Naive thymus-derived CD4-positive, alpha-beta T cell (primary cell): ENCODE measurements at regions of chrX and their contacts with region 1.

Region 1: GRCh38 chrX:100768679-100769338 is 36.9 kb upstream of the SYTL4 start:
- DNase-seq: peak; percentile 50 to 87 (median 77)
- ATAC-seq: peak; percentile 100
- H3K4me3 ChIP-seq: no peak overlapping the region
- H3K4me3 Mint-ChIP-seq: no peak overlapping the region
- H3K27ac ChIP-seq: no peak overlapping the region
- H3K27ac Mint-ChIP-seq: no peak overlapping the region
- H3K4me1 ChIP-seq: no peaks in the 10 kb centered on the region
- H3K4me1 Mint-ChIP-seq: no peaks in the 10 kb centered on the region
- H3K27me3 ChIP-seq: no peaks in the 10 kb centered on the region
- H3K27me3 Mint-ChIP-seq: peaks cover 0 to 31% (median 6%) of the 10 kb centered on the region in 5 donors

Region 2: DNA sequence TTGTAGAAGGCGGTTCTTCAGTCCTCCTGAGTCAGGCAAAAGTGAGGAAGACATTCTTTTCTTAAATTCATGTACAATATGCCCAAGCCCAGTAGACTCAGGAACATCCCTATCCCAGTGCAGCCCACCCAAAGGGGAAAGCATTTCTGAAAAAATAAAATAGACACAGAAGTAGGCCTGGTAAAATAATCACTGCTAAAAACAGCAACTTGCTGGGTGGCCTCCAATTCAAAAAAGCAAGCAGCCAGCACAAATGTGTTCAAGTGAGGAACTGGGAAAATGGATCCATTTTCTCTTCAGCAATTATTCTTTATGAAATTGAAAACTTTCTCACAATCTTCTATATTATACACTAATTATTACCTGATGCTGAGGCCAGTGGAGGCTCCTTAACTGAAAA is 524.1 kb before region 1 on chrX:
- CTCF ChIA-PET with region 1: no interaction called
- POLR2A ChIA-PET with region 1: no interaction called
- intact Hi-C with region 1: no loop called
- DNase-seq: no peak
- ATAC-seq: no peak
- H3K4me3 ChIP-seq: no peak overlapping the region
- H3K4me3 Mint-ChIP-seq: no peak overlapping the region
- H3K27ac ChIP-seq: no peak overlapping the region
- H3K27ac Mint-ChIP-seq: no peak overlapping the region
- H3K4me1 ChIP-seq: no peaks in the 10 kb centered on the region
- H3K4me1 Mint-ChIP-seq: no peaks in the 10 kb centered on the region
- H3K27me3 ChIP-seq: no peaks in the 10 kb centered on the region
- H3K27me3 Mint-ChIP-seq: no peaks in the 10 kb centered on the region

Region 3: DNA sequence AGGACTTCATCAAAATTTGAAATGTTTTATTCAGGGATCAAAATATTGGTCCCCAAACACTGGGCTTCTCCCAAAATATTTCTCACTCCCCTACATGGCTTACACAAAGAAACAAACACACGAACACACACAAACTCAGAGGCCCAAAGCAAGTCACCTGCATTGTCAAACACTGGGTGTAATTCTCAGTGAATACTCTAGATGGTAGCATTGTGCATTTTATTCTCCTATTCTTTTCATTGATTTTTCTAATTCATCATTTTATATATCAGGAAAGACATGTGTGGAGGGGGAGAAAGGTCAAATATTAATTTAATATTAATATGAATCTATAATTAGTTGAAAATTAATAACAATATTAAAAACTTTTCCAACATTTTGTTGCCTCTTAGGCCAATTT is 256.3 kb before region 1 on chrX:
- CTCF ChIA-PET with region 1: no interaction called
- POLR2A ChIA-PET with region 1: no interaction called
- intact Hi-C with region 1: loop called in 1 of 2 experiments (anchors 1 kb)
- DNase-seq: peak in 4 of 9 donors; percentile 1 to 15 (median 4)
- ATAC-seq: no peak
- H3K4me3 ChIP-seq: no peak overlapping the region
- H3K4me3 Mint-ChIP-seq: no peak overlapping the region
- H3K27ac ChIP-seq: no peak overlapping the region
- H3K27ac Mint-ChIP-seq: no peak overlapping the region
- H3K4me1 ChIP-seq: no peaks in the 10 kb centered on the region
- H3K4me1 Mint-ChIP-seq: no peaks in the 10 kb centered on the region
- H3K27me3 ChIP-seq: no peaks in the 10 kb centered on the region
- H3K27me3 Mint-ChIP-seq: peaks cover 0 to 4% (median 0%) of the 10 kb centered on the region in 5 donors

Region 4: GRCh38 chrX:100674705-100675104 is 94.1 kb before region 1 on chrX:
- CTCF ChIA-PET with region 1: no interaction called
- POLR2A ChIA-PET with region 1: no interaction called
- intact Hi-C with region 1: loop called in 1 of 2 experiments (anchors 5 kb)
- DNase-seq: no peak
- ATAC-seq: no peak
- H3K4me3 ChIP-seq: no peak overlapping the region
- H3K4me3 Mint-ChIP-seq: no peak overlapping the region
- H3K27ac ChIP-seq: no peak overlapping the region
- H3K27ac Mint-ChIP-seq: no peak overlapping the region
- H3K4me1 ChIP-seq: no peaks in the 10 kb centered on the region
- H3K4me1 Mint-ChIP-seq: peaks cover 0 to 11% (median 5%) of the 10 kb centered on the region in 7 donors
- H3K27me3 ChIP-seq: no peaks in the 10 kb centered on the region
- H3K27me3 Mint-ChIP-seq: no peaks in the 10 kb centered on the region

Region 5: GRCh38 chrX:100685284-100685996 is 83.4 kb before region 1 on chrX:
- CTCF ChIA-PET with region 1: interaction called, 10 read pairs
- POLR2A ChIA-PET with region 1: no interaction called
- intact Hi-C with region 1: loop called (anchors 1 kb)
- DNase-seq: peak in 8 of 9 donors; percentile 34 to 69 (median 60)
- ATAC-seq: peak; percentile 83
- H3K4me3 ChIP-seq: no peak overlapping the region
- H3K4me3 Mint-ChIP-seq: no peak overlapping the region
- H3K27ac ChIP-seq: no peak overlapping the region
- H3K27ac Mint-ChIP-seq: no peak overlapping the region
- H3K4me1 ChIP-seq: no peaks in the 10 kb centered on the region
- H3K4me1 Mint-ChIP-seq: peaks cover 0 to 14% (median 5%) of the 10 kb centered on the region in 7 donors
- H3K27me3 ChIP-seq: no peaks in the 10 kb centered on the region
- H3K27me3 Mint-ChIP-seq: peaks cover 0 to 3% (median 0%) of the 10 kb centered on the region in 5 donors

Region 6: DNA sequence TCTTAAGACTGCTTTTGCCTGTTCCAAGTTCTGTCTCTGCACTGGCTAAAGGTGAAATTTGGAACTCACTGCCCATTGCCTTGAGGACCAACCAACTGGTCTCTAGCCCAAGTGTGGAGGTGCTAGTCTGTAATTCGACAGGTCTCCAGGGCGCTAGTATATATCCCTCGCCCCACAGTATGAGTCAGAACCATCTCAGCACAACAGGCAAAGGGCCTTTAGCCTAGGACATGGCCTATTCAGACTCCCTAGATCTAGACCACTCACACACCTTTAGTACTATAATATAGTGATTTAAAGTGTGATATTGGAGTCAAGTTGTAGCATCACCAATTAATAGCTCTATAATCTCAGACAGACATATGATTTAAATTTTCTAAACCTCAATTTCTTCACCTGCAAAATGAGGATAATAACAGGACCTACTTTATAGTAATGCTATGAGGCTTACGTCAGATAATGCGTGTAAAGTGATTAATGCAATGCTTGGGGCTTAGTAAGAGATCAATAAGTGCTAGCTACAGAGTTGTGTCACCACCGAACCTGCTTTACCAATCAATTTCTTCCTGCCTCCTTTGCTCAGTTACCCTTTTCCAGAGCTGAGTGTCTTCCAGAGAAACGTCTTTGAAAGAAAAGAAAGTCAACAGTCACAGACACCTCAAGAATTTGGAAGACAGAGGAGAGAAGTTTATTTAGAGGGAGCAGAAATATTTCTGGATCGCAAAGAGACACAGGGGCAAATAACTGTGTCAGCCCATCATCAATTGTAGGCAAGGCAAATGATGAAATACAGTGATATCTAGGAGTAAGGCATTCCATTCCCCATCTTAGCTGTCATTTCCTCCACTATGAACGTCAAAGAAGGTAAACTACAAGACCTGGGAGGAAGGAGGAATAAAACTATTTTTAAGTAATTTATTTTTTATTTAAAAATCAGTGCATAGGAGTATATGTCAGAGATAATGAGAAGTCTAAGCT is 103.1 kb after region 1 on chrX:
- CTCF ChIA-PET with region 1: no interaction called
- POLR2A ChIA-PET with region 1: no interaction called
- intact Hi-C with region 1: no loop called
- DNase-seq: no peak
- ATAC-seq: no peak
- H3K4me3 ChIP-seq: no peak overlapping the region
- H3K4me3 Mint-ChIP-seq: no peak overlapping the region
- H3K27ac ChIP-seq: no peak overlapping the region
- H3K27ac Mint-ChIP-seq: no peak overlapping the region
- H3K4me1 ChIP-seq: no peaks in the 10 kb centered on the region
- H3K4me1 Mint-ChIP-seq: no peaks in the 10 kb centered on the region
- H3K27me3 ChIP-seq: no peaks in the 10 kb centered on the region
- H3K27me3 Mint-ChIP-seq: peaks cover 0 to 4% (median 0%) of the 10 kb centered on the region in 5 donors

Region 7: DNA sequence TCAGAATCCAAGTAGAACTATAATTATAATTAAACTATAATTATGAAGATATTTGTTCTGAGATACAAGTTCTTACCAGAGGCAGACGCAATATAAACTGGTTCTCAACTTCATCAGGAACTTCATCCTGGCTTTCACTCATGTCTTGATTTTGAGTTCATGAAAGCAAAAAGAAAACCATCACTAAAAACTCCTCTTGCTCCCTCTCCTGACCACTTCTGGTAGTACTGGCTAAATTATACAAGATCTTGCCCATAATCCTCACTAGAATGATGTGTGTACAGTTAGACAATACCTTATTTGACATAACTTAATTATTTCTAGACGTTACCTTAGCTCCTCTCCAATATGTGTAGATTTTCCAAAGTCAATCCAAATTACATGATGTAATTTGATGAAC is 518.6 kb after region 1 on chrX:
- CTCF ChIA-PET with region 1: no interaction called
- POLR2A ChIA-PET with region 1: no interaction called
- intact Hi-C with region 1: loop called in 1 of 2 experiments (anchors 1 kb)
- DNase-seq: peak in 6 of 9 donors; percentile 1 to 44 (median 38)
- ATAC-seq: peak; percentile 55
- H3K4me3 ChIP-seq: no peak overlapping the region
- H3K4me3 Mint-ChIP-seq: no peak overlapping the region
- H3K27ac ChIP-seq: no peak overlapping the region
- H3K27ac Mint-ChIP-seq: no peak overlapping the region
- H3K4me1 ChIP-seq: no peaks in the 10 kb centered on the region
- H3K4me1 Mint-ChIP-seq: no peaks in the 10 kb centered on the region
- H3K27me3 ChIP-seq: no peaks in the 10 kb centered on the region
- H3K27me3 Mint-ChIP-seq: peaks cover 0 to 6% (median 0%) of the 10 kb centered on the region in 5 donors